G401 (cell line): ENCODE measurements at regions of chr1 and their contacts with region 1.

Region 1: DNA sequence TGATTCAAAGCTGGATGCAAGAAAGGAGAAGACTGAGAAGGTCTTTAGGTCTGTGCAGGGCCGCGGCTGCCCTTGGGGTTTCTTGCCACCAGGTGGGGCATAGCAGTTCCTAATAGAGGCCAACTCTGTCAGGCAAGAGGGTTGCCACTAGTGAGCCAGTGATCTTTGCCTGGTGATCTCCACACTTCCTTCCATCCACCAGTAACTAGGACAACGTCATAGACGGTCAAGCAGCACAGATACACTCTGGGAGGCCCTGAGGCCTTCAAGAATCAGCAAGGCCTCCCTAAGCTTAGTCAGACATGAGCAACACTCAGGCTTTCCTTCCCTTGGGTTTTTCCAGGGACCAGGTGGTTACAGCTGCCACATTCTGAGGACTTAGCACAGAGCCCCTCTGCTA is 32.9 kb upstream of the ATP2B4 start:
- DNase-seq: no peak

Region 2: GRCh38 chr1:203422656-203423055 is 171.1 kb before region 1 on chr1:
- in situ Hi-C with region 1: no loop called
- DNase-seq: no peak

Region 3: DNA sequence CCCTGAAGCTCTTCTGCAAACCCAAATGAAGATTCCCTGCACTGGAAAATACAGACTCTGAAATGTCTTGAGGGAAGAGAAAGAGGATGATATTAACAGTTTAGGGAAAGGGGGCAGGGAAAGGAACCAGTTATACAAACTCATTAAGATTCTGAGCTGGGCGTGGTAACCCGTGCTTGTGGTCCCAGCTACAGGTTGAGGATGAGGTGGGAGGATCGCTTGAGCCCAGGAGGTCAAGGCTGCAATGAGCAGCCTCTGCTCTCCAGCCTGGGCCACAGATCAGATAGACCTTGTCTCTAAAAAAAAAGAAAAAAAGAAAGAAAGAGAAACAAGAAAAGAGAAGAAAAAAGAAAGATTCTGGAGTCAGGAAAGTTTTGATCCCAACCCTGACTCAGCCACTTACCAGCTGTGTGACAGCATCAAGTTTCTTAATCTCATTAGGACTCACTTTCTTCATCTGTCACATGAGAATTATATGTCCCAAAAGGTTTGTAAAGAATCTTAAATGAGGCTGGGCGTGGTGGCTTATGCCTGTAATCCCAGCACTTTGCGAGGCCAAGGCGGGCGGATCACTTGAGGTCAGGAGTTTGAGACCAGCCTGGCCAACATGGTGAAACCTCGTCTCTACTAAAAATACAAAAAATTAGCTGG is 45.8 kb before region 1 on chr1:
- in situ Hi-C with region 1: no loop called
- DNase-seq: no peak

Region 4: DNA sequence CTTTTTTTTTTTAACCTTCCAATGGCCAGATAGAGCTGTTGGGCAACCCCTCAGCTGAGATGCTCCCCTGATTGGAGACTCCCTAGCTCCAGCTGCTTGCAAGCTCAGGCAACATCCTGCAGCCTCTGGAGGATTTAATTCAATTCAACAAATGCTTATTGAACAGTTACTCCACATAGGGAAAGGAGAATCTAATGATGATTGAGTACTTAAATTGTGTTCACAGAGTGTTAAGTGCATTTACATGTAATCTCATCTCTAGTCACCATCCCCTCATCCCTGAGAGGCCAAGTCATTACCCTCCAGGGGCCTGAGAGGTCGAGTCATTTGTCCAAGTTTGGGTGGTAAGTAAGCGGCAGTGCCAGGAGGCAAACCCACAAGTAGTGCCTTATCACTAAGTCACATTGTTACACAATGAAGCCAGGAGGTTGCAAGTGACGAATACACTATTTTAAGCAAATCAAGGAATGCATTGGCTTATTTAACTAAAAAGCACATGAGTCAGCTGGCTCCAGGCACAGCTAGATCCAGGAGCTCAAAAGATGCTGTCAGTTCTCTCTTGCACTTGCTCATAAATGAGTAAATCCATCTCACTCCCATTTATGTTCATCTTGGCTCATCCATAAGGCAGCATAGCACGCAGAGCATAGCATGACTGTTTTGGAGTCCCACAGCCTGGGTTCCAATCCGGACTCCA is 35.5 kb before region 1 on chr1:
- in situ Hi-C with region 1: no loop called
- DNase-seq: no peak

Region 5: DNA sequence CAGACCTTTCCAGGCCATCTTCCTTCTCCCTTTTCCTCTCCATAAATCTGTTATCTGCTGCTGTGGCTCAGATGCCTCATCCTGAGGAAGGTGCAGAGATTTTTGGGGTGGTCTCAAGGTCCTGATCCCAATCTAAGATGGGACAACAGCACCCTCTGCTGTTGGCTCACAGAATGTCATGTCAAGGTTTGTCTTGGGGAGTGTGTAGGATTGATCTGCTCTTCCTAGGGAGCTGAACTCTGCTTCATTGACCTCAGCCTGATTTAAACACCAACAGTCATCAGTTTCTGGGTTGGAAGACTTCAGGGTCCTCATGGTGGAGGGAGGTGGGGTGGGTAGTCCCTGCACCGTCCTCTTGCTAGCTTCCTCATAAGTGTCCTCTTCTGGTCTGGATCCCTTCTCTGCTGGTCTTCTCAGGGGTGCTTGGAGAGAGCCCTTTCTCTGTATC is 108.4 kb after region 1 on chr1:
- in situ Hi-C with region 1: loop called (anchors 25 kb)
- DNase-seq: peak; percentile 82